ENCODE measurements at regions of chr18 and their contacts with region 1.

Region 1: GRCh38 chr18:79217979-79218604 is 148.9 kb downstream of the ATP9B start:
- DNase-seq: peak in 4 of 10 donors; percentile 42 to 56 (median 52)
- H3K4me3 ChIP-seq: peak overlapping the region in 35 of 59 donors; percentile 4 to 52 (median 25)
- H3K27ac ChIP-seq: peak overlapping the region in 57 of 59 donors; percentile 13 to 86 (median 75)
- H3K27me3 ChIP-seq: no peaks in the 10 kb centered on the region
- CTCF ChIP-seq: peak in 1 of 56 donors; percentile 25

Region 2: GRCh38 chr18:78511666-78512601 is 706.2 kb before region 1 on chr18:
- intact Hi-C with region 1: no loop called
- DNase-seq: peak in 1 of 10 donors; percentile 39
- H3K4me3 ChIP-seq: no peak overlapping the region
- H3K27ac ChIP-seq: no peak overlapping the region
- H3K27me3 ChIP-seq: peaks cover 0 to 18% (median 0%) of the 10 kb centered on the region in 45 donors
- CTCF ChIP-seq: no peak

Region 3: DNA sequence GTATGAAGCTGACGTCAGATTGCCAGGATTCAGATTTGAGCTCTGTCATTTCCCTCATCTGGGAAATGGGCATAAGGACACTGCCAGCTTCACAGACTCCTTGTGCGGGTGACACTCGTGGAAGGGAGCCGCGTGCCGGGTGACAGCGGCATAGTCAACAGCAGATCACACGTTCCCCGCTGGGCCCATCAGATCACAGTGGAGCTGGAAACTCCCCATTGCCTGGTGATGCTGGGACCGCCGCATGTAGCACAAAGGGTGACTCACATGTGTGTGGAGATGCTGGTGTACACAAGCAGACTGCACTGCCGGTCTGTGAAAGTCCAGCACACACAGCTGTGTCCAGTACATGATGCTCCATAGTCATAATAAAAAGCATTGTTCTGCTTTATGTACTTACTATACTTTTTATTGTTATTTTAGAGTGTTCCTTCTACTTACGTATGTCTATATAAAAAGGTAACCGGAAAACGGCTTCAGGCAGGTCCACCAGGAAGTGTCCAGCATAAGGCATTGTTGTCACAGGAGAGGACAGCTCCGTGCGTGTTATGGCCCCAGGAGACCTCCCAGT is 206.7 kb before region 1 on chr18:
- intact Hi-C with region 1: no loop called
- DNase-seq: no peak
- H3K4me3 ChIP-seq: no peak overlapping the region
- H3K27ac ChIP-seq: no peak overlapping the region
- H3K27me3 ChIP-seq: peaks cover 0 to 2% (median 0%) of the 10 kb centered on the region in 45 donors
- CTCF ChIP-seq: no peak

Region 4: GRCh38 chr18:79068937-79069791 is 148.9 kb before region 1 on chr18 and contains the start of gene ATP9B:
- intact Hi-C with region 1: loop called in 1 of 2 experiments (anchors 5 kb)
- DNase-seq: peak; percentile 94 to 99 (median 98)
- H3K4me3 ChIP-seq: peak within 1 kb of the TSS; percentile 48 to 100 (median 97)
- H3K27ac ChIP-seq: peak within 1 kb of the TSS; percentile 40 to 98 (median 94)
- H3K27me3 ChIP-seq: no peaks in the 10 kb centered on the region
- CTCF ChIP-seq: peak in 49 of 56 donors; percentile 4 to 62 (median 37)
- total RNA-seq, gene ATP9B: 67.5 to 145 (median 97.7) TPM

Region 5: GRCh38 chr18:79169958-79170555 is 48.0 kb before region 1 on chr18:
- intact Hi-C with region 1: no loop called
- DNase-seq: no peak
- H3K4me3 ChIP-seq: no peak overlapping the region
- H3K27ac ChIP-seq: no peak overlapping the region
- H3K27me3 ChIP-seq: no peaks in the 10 kb centered on the region
- CTCF ChIP-seq: no peak

Region 6: DNA sequence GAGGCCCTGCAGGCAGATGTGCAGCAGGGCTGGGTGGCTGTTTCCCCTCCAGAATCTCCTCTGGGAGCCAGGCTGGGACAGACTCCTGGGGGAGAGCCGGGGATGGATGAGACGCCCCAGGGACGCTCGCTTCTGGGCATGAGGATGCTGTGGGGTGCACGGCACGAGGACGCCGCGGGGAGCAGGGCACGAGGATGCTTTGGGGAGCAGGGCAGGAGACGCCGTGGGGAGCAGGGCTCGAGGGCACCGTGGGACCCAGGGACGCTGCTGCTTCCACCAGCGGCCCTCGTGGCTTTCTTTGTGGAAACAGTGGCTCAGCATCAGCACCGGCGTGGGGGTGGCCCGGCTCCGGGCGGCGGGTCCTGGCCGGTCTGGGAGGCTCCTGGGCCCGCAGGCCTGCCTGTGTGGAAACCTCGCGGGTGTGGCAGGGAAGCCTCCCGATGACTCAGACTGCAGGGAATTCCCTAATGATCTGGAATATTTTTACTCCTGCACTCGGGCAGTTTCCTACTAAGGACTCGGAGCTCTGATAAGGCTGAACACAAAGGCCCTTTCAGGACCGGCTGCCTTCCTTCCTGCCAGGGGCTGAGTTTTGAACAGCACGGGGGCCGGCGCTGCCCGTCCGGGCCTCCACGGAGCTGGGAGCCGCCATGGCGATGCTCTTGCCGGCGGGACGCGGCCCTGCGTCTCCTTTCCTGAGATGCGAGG is 240.2 kb after region 1 on chr18:
- intact Hi-C with region 1: no loop called
- DNase-seq: peak in 1 of 10 donors; percentile 60
- H3K4me3 ChIP-seq: peak overlapping the region in 25 of 59 donors; percentile 2 to 52 (median 27)
- H3K27ac ChIP-seq: peak overlapping the region in 19 of 59 donors; percentile 5 to 67 (median 33)
- H3K27me3 ChIP-seq: no peaks in the 10 kb centered on the region
- CTCF ChIP-seq: no peak